Breast epithelium (tissue), 4 donors: ENCODE measurements at regions of chr9 and their contacts with region 1.

Region 1: GRCh38 chr9:9412241-9412640 is 1200.6 kb downstream of the PTPRD start:
- DNase-seq: no peak
- H3K4me3 ChIP-seq: no peak overlapping the region
- H3K27ac ChIP-seq: no peak overlapping the region
- H3K4me1 ChIP-seq: no peaks in the 10 kb centered on the region
- H3K27me3 ChIP-seq: no peaks in the 10 kb centered on the region
- CTCF ChIP-seq: no peak
- POLR2A ChIP-seq: no peak

Region 2: DNA sequence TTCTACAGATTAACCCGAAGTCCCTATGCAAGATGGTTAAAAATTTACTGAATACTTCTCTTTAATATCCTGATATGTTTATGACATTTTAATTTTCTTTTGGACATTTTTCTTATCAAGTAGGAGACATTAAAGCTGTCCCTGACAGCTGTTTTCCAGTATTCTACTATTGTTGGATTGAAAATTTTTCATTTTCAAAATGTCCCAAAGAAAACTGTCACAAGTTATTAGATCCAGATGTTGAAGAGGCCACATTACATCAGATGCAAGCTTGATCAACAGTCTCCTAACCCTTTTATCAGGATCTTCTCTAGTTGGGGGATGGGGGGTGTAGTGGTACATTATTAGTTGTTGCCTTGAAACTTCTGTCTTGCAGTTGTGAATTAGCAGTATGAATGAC is 210.0 kb before region 1 on chr9:
- intact Hi-C with region 1: loop called (anchors 5 kb)
- DNase-seq: no peak
- H3K4me3 ChIP-seq: no peak overlapping the region
- H3K27ac ChIP-seq: no peak overlapping the region
- H3K4me1 ChIP-seq: no peaks in the 10 kb centered on the region
- H3K27me3 ChIP-seq: no peaks in the 10 kb centered on the region
- CTCF ChIP-seq: no peak
- POLR2A ChIP-seq: no peak